GM10248 (cell line): ENCODE measurements at regions of chrX and their contacts with region 1.

Region 1: GRCh38 chrX:41180194-41180908 is 95.1 kb downstream of the USP9X start:
- DNase-seq: peak; percentile 45
- CTCF ChIP-seq: peak; percentile 52

Region 2: GRCh38 chrX:40987413-40987812 is 192.9 kb before region 1 on chrX:
- CTCF ChIA-PET with region 1: no interaction called
- POLR2A ChIA-PET with region 1: no interaction called
- DNase-seq: no peak
- CTCF ChIP-seq: no peak

Region 3: GRCh38 chrX:41137589-41137988 is 42.8 kb before region 1 on chrX:
- CTCF ChIA-PET with region 1: interaction called, 10 read pairs
- POLR2A ChIA-PET with region 1: no interaction called
- DNase-seq: no peak
- CTCF ChIP-seq: no peak

Region 4: GRCh38 chrX:41153448-41153847 is 26.9 kb before region 1 on chrX:
- CTCF ChIA-PET with region 1: interaction called, 12 read pairs
- POLR2A ChIA-PET with region 1: no interaction called
- DNase-seq: no peak
- CTCF ChIP-seq: no peak

Region 5: DNA sequence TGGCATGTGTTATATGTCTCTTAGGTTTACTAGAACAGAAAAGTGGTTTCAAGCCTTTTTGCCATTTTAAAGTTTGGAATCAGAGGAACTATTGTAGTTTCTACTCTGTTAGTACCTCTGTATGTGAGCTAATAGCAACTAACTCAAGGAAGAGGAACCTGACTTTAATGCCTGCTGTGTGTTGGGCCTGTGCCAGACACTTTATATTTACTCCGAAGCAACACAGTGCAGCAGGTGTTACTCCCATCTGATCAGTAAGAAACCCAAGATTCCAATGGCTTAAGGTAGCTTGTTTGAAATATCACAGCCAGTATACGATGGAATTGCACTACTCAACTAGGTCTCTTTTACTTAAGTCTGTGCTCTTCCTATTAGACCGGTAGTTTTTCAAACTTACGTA is 15.9 kb before region 1 on chrX:
- CTCF ChIA-PET with region 1: interaction called, 29 read pairs
- POLR2A ChIA-PET with region 1: no interaction called
- DNase-seq: no peak
- CTCF ChIP-seq: no peak

Region 6: GRCh38 chrX:41198406-41198805 is 18.1 kb after region 1 on chrX:
- CTCF ChIA-PET with region 1: interaction called, 16 read pairs
- POLR2A ChIA-PET with region 1: no interaction called
- DNase-seq: no peak
- CTCF ChIP-seq: no peak

Region 7: GRCh38 chrX:41209853-41210252 is 29.5 kb after region 1 on chrX:
- CTCF ChIA-PET with region 1: interaction called, 10 read pairs
- POLR2A ChIA-PET with region 1: no interaction called
- DNase-seq: no peak
- CTCF ChIP-seq: no peak

Region 8: GRCh38 chrX:41259516-41259915 is 79.2 kb after region 1 on chrX:
- CTCF ChIA-PET with region 1: interaction called, 45 read pairs
- POLR2A ChIA-PET with region 1: no interaction called
- DNase-seq: no peak
- CTCF ChIP-seq: no peak